CD4-positive, alpha-beta T cell (primary cell): ENCODE measurements at regions of chr6 and their contacts with region 1.

Region 1: DNA sequence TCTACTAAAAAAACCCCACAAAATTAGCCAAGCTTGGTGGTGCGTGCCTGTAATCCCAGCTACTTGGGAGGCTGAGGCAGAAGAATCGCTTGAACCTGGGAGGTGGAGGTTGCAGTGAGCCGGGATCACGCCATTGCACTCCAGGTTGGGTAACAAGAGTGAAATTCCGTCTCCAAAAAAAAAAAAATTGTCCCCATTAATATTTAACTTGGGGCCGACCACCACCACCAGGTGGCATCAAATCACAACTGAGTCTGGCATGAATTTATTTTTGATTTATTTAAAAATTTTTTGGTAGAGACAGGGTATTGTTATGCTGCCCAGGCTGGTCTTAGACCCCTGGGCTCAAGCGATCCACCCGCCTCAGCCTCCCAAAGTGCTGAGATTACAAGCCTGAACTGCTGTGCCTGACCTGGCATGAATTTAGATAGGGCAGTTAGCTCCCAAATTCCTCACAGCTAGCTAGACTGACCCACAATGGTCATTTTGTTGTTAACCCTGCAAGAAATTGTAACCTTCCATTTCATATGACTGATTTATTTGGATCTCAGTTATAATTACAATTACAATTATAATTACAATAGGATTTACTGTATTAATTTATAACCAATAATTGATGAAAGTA is 17.1 kb upstream of the BEND3 start:
- DNase-seq: peak in 6 of 14 experiments; percentile 9 to 37 (median 28)
- ATAC-seq: no peak
- H3K4me3 ChIP-seq: no peak overlapping the region
- H3K4me3 Mint-ChIP-seq: no peak overlapping the region
- H3K27ac ChIP-seq: no peak overlapping the region
- H3K27ac Mint-ChIP-seq: no peak overlapping the region
- H3K4me1 ChIP-seq: no peaks in the 10 kb centered on the region
- H3K4me1 Mint-ChIP-seq: no peaks in the 10 kb centered on the region
- H3K27me3 ChIP-seq: no peaks in the 10 kb centered on the region
- H3K27me3 Mint-ChIP-seq: no peaks in the 10 kb centered on the region
- CTCF ChIP-seq: peak; percentile 31

Region 2: GRCh38 chr6:107218142-107218541 is 85.7 kb after region 1 on chr6:
- CTCF ChIA-PET with region 1: no interaction called
- POLR2A ChIA-PET with region 1: no interaction called
- intact Hi-C with region 1: no loop called
- DNase-seq: no peak
- ATAC-seq: no peak
- H3K4me3 ChIP-seq: no peak overlapping the region
- H3K4me3 Mint-ChIP-seq: no peak overlapping the region
- H3K27ac ChIP-seq: no peak overlapping the region
- H3K27ac Mint-ChIP-seq: no peak overlapping the region
- H3K4me1 ChIP-seq: no peaks in the 10 kb centered on the region
- H3K4me1 Mint-ChIP-seq: no peaks in the 10 kb centered on the region
- H3K27me3 ChIP-seq: no peaks in the 10 kb centered on the region
- H3K27me3 Mint-ChIP-seq: no peaks in the 10 kb centered on the region
- CTCF ChIP-seq: no peak

Region 3: GRCh38 chr6:108052706-108053105 is 920.3 kb after region 1 on chr6:
- CTCF ChIA-PET with region 1: no interaction called
- POLR2A ChIA-PET with region 1: no interaction called
- intact Hi-C with region 1: loop called (anchors 5 kb)
- DNase-seq: no peak
- ATAC-seq: no peak
- H3K4me3 ChIP-seq: no peak overlapping the region
- H3K4me3 Mint-ChIP-seq: no peak overlapping the region
- H3K27ac ChIP-seq: no peak overlapping the region
- H3K27ac Mint-ChIP-seq: no peak overlapping the region
- H3K4me1 ChIP-seq: no peaks in the 10 kb centered on the region
- H3K4me1 Mint-ChIP-seq: no peaks in the 10 kb centered on the region
- H3K27me3 ChIP-seq: no peaks in the 10 kb centered on the region
- H3K27me3 Mint-ChIP-seq: no peaks in the 10 kb centered on the region
- CTCF ChIP-seq: no peak